GM12878 (cell line): ENCODE measurements at regions of chr6 and their contacts with region 1.

Region 1: GRCh38 chr6:5566718-5567117 is 305.4 kb downstream of the FARS2 start:
- DNase-seq: peak; percentile 79
- ATAC-seq: peak; percentile 83
- H3K4me3 ChIP-seq: peak overlapping the region; percentile 34; the same call in 1 of the 2 replicates
- H3K27ac ChIP-seq: peak overlapping the region; percentile 89
- H3K4me1 ChIP-seq: peaks cover 40% of the 10 kb centered on the region
- H3K27me3 ChIP-seq: no peaks in the 10 kb centered on the region
- CTCF ChIP-seq: no peak
- EP300 ChIP-seq: peak in 1 of 2 experiments; percentile 37; a peak in 1 of 4 replicates
- POLR2A ChIP-seq: no peak
- RAD21 ChIP-seq: peak; percentile 23; the same call in 1 of the 2 replicates

Region 2: DNA sequence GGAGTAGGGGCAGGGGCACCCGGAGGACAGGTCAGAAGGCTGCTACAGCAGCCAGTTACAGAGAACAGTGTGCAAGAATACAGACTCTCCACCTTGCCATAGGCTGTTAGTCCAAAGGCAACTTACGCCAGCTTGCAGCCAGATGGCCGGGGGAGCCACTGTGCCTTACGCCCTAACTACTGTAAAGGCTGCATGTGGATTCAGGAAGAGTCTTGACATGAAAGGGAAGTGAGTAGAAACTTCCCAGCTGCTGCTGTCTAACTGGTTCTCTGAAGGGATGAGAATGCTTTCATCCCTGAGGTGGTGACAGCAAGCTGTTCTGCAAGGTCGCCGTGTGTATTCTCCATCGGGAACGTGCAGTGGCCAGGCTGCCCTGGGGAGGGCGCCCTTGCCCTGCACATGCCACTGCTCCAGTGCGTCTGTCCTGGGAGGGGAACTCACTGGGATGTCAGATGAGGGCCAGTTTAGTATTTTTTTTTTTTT is 352.1 kb before region 1 on chr6:
- CTCF ChIA-PET with region 1: no interaction called
- POLR2A ChIA-PET with region 1: no interaction called
- RAD21 ChIA-PET with region 1: no interaction called
- SMC1A ChIA-PET with region 1: no interaction called
- in situ Hi-C with region 1: no loop called
- intact Hi-C with region 1: no loop called
- DNase-seq: no peak
- ATAC-seq: peak; percentile 87
- H3K4me3 ChIP-seq: no peak overlapping the region
- H3K27ac ChIP-seq: no peak overlapping the region
- H3K4me1 ChIP-seq: no peaks in the 10 kb centered on the region
- H3K27me3 ChIP-seq: no peaks in the 10 kb centered on the region
- CTCF ChIP-seq: peak; percentile 58 to 73 (median 70)
- EP300 ChIP-seq: no peak
- POLR2A ChIP-seq: no peak
- RAD21 ChIP-seq: peak; percentile 89

Region 3: DNA sequence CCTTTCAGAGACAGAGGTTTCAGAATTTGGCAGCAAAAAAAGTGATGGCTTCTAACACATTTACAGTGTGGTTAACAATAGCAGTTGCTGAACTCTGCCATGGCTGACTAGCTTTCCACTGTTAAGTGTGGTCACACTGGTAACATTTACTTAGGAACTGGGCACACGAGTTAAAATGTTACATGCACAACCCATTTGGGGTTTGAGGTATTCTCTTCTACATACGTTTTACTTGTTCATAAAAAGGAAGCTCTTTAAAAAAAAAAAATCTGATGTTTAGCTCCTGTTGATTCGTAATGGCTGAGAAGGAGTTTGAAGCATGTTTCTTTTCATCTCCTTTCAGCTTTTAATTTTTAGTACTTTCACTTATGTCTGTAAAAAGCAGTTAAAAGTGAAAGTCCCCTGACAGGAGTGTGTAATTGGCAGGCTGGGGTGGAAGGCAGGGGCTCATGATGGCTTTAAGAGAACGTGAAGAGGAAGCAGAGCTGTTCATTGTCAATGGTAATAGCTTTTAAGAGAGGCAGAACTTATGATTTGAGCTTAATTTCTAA is 59.5 kb before region 1 on chr6:
- CTCF ChIA-PET with region 1: interaction called, 9 read pairs
- POLR2A ChIA-PET with region 1: interaction called, 9 read pairs
- RAD21 ChIA-PET with region 1: interaction called, 42 read pairs
- SMC1A ChIA-PET with region 1: interaction called, 44 read pairs
- in situ Hi-C with region 1: no loop called
- intact Hi-C with region 1: loop called (anchors 5 kb)
- DNase-seq: peak; percentile 92
- ATAC-seq: peak; percentile 94
- H3K4me3 ChIP-seq: peak overlapping the region; percentile 60
- H3K27ac ChIP-seq: peak overlapping the region; percentile 88
- H3K4me1 ChIP-seq: peaks cover 26% of the 10 kb centered on the region
- H3K27me3 ChIP-seq: no peaks in the 10 kb centered on the region
- CTCF ChIP-seq: no peak
- EP300 ChIP-seq: peak in 1 of 2 experiments; percentile 85; a peak in 3 of 4 replicates
- POLR2A ChIP-seq: no peak
- RAD21 ChIP-seq: no peak

Region 4: GRCh38 chr6:5517796-5518195 is 48.9 kb before region 1 on chr6:
- CTCF ChIA-PET with region 1: interaction called, 6 read pairs
- POLR2A ChIA-PET with region 1: no interaction called
- RAD21 ChIA-PET with region 1: interaction called, 5 read pairs
- SMC1A ChIA-PET with region 1: interaction called, 20 read pairs
- in situ Hi-C with region 1: no loop called
- intact Hi-C with region 1: no loop called
- DNase-seq: no peak
- ATAC-seq: peak; percentile 72
- H3K4me3 ChIP-seq: no peak overlapping the region
- H3K27ac ChIP-seq: peak overlapping the region; percentile 9; the same call in 1 of the 2 replicates
- H3K4me1 ChIP-seq: peaks cover 37% of the 10 kb centered on the region
- H3K27me3 ChIP-seq: no peaks in the 10 kb centered on the region
- CTCF ChIP-seq: no peak
- EP300 ChIP-seq: no peak
- POLR2A ChIP-seq: no peak
- RAD21 ChIP-seq: peak; percentile 6; the same call in 1 of the 2 replicates

Region 5: GRCh38 chr6:5718231-5718947 is 151.7 kb after region 1 on chr6:
- CTCF ChIA-PET with region 1: interaction called, 3 read pairs
- POLR2A ChIA-PET with region 1: no interaction called
- RAD21 ChIA-PET with region 1: interaction called, 3 read pairs
- SMC1A ChIA-PET with region 1: no interaction called
- in situ Hi-C with region 1: no loop called
- intact Hi-C with region 1: loop called (anchors 1 kb)
- DNase-seq: no peak
- ATAC-seq: no peak
- H3K4me3 ChIP-seq: no peak overlapping the region
- H3K27ac ChIP-seq: no peak overlapping the region
- H3K4me1 ChIP-seq: peaks cover 5% of the 10 kb centered on the region
- H3K27me3 ChIP-seq: no peaks in the 10 kb centered on the region
- CTCF ChIP-seq: no peak
- EP300 ChIP-seq: no peak
- POLR2A ChIP-seq: no peak
- RAD21 ChIP-seq: no peak

Region 6: GRCh38 chr6:5723841-5724691 is 157.3 kb after region 1 on chr6:
- CTCF ChIA-PET with region 1: interaction called, 3 read pairs
- POLR2A ChIA-PET with region 1: no interaction called
- RAD21 ChIA-PET with region 1: interaction called, 5 read pairs
- SMC1A ChIA-PET with region 1: interaction called, 3 read pairs
- in situ Hi-C with region 1: no loop called
- intact Hi-C with region 1: loop called (anchors 1 kb)
- DNase-seq: peak; percentile 60
- ATAC-seq: peak; percentile 98
- H3K4me3 ChIP-seq: peak overlapping the region; percentile 71
- H3K27ac ChIP-seq: peak overlapping the region; percentile 84
- H3K4me1 ChIP-seq: peaks cover 18% of the 10 kb centered on the region
- H3K27me3 ChIP-seq: no peaks in the 10 kb centered on the region
- CTCF ChIP-seq: no peak
- EP300 ChIP-seq: peak; percentile 54 to 95
- POLR2A ChIP-seq: peak; percentile 68
- RAD21 ChIP-seq: no peak